Mammary epithelial cell (primary cell): ENCODE measurements at regions of chr20 and their contacts with region 1.

Region 1: DNA sequence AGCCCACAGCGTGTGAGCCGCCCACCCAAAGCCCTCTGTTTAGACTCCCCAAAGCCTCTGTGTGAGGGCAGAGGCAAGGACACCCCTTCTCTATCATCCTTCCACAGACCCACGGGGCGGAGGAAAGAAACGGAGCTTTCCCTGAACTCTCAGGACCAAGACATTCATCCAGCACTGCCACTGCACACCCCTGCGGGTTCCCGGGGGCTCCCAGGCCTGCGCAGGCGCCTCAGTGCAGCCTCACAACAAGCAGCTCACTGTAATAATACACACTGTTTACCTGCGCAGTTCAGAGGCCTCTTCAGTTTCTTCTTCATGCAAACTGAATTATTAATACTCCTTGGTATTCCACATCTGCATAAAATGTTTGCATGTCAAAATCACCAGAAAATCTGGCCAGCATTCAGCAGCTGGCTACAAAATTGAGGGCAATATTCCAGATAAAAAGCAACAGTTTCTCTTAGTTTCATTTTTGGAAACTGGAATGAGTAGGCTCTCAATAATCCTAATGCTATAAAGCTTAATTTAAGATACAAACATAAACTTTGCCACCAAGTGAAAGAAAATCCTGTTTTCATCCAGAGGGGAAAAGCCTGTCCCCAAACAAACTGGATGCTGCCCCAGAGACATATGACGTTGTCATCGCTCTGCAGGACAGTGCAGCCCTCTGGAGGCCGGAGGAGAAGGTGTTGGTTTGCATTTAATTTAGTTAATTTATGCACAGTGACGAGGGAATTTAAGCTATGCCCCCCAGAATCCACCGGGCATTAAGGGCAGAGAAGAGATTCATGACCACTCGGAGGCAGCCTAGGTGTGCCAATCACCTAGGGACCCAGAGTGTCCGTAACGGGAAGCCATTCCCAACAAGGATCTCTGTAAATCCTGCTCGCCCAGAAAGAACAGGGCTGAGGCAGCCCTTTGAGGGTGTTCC is 45.3 kb downstream of the NINL start:
- DNase-seq: peak; percentile 14
- H3K4me3 ChIP-seq: peak overlapping the region; percentile 4 to 29 (median 23)
- H3K27ac ChIP-seq: peak overlapping the region; percentile 6
- H3K4me1 ChIP-seq: peaks cover 16% of the 10 kb centered on the region
- H3K27me3 ChIP-seq: no peaks in the 10 kb centered on the region
- CTCF ChIP-seq: peak; percentile 34 to 74

Region 2: GRCh38 chr20:25336561-25337422 is 203.2 kb before region 1 on chr20:
- CTCF ChIA-PET with region 1: interaction called, 3 read pairs
- dilution Hi-C with region 1: no loop called
- in situ Hi-C with region 1: no loop called
- intact Hi-C with region 1: loop called (anchors 1 kb)
- DNase-seq: peak; percentile 76
- H3K4me3 ChIP-seq: no peak overlapping the region
- H3K27ac ChIP-seq: no peak overlapping the region
- H3K4me1 ChIP-seq: peaks cover 3% of the 10 kb centered on the region
- H3K27me3 ChIP-seq: no peaks in the 10 kb centered on the region
- CTCF ChIP-seq: peak; percentile 67 to 89

Region 3: GRCh38 chr20:25407311-25408169 is 132.5 kb before region 1 on chr20 and contains the start of gene GINS1:
- CTCF ChIA-PET with region 1: no interaction called
- dilution Hi-C with region 1: no loop called
- in situ Hi-C with region 1: no loop called
- intact Hi-C with region 1: loop called (anchors 5 kb)
- DNase-seq: peak; percentile 89
- H3K4me3 ChIP-seq: peak within 1 kb of the TSS; percentile 77 to 82 (median 78)
- H3K27ac ChIP-seq: peak within 1 kb of the TSS; percentile 73
- H3K4me1 ChIP-seq: peaks cover 11% of the 10 kb centered on the region
- H3K27me3 ChIP-seq: no peaks in the 10 kb centered on the region
- CTCF ChIP-seq: no peak
- total RNA-seq, gene GINS1: 5.7 to 16.8 TPM

Region 4: GRCh38 chr20:25470045-25470444 is 70.0 kb before region 1 on chr20:
- CTCF ChIA-PET with region 1: no interaction called
- dilution Hi-C with region 1: no loop called
- in situ Hi-C with region 1: no loop called
- intact Hi-C with region 1: loop called (anchors 1 kb)
- DNase-seq: peak; percentile 18
- H3K4me3 ChIP-seq: no peak overlapping the region
- H3K27ac ChIP-seq: no peak overlapping the region
- H3K4me1 ChIP-seq: no peaks in the 10 kb centered on the region
- H3K27me3 ChIP-seq: no peaks in the 10 kb centered on the region
- CTCF ChIP-seq: peak; percentile 49 to 76

Region 5: GRCh38 chr20:25496968-25497640 is 42.9 kb before region 1 on chr20:
- CTCF ChIA-PET with region 1: no interaction called
- dilution Hi-C with region 1: no loop called
- in situ Hi-C with region 1: no loop called
- intact Hi-C with region 1: no loop called
- DNase-seq: peak; percentile 93
- H3K4me3 ChIP-seq: no peak overlapping the region
- H3K27ac ChIP-seq: no peak overlapping the region
- H3K4me1 ChIP-seq: peaks cover 14% of the 10 kb centered on the region
- H3K27me3 ChIP-seq: no peaks in the 10 kb centered on the region
- CTCF ChIP-seq: no peak

Region 6: GRCh38 chr20:25517124-25517523 is 22.9 kb before region 1 on chr20:
- CTCF ChIA-PET with region 1: no interaction called
- dilution Hi-C with region 1: no loop called
- in situ Hi-C with region 1: no loop called
- intact Hi-C with region 1: no loop called
- DNase-seq: no peak
- H3K4me3 ChIP-seq: no peak overlapping the region
- H3K27ac ChIP-seq: no peak overlapping the region
- H3K4me1 ChIP-seq: no peaks in the 10 kb centered on the region
- H3K27me3 ChIP-seq: no peaks in the 10 kb centered on the region
- CTCF ChIP-seq: no peak

Region 7: DNA sequence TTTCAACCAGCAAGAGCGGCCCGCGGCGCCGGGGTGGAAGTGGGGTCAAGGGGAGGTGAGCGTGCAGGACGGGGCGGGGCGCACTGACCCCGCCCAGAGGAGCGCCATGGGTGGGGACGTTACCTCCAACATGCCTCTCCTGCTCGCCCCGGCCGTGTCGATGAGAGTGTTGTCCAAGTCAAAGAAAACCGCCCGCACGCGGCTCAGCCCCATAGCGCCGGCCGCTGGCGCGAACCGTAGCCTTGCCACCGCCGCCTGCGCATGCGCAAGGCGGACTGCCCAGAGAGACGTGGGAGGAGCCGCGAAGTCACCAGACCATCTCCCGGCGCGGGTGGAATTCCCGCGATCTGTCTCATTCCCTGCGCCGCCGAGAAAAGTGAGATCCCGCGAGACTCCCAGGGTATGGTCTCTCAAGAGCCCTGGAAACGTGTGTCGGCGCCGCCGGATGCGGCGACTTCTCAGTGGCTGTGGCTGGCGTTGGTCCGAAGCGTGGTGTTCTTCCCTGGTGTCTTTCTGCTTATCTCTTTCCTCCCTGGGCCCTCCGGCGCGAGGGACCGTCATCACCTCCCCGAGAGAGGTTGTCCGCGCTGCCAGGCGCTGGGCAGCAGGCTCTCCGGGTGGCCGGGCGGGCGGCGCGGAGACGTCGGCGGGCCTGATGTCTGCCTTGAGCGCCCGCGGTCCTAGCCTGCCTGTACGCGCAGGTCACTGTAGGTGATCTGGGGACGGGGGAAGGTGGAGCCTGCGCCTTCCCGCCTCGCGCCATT is 83.9 kb after region 1 on chr20 and contains the start of gene NANP:
- CTCF ChIA-PET with region 1: no interaction called
- dilution Hi-C with region 1: no loop called
- in situ Hi-C with region 1: no loop called
- intact Hi-C with region 1: no loop called
- DNase-seq: peak; percentile 98
- H3K4me3 ChIP-seq: peak within 1 kb of the TSS; percentile 53 to 94 (median 87)
- H3K27ac ChIP-seq: peak within 1 kb of the TSS; percentile 83
- H3K4me1 ChIP-seq: peaks cover 18% of the 10 kb centered on the region
- H3K27me3 ChIP-seq: no peaks in the 10 kb centered on the region
- CTCF ChIP-seq: peak in 1 of 2 donors; percentile 25
- total RNA-seq, gene NANP: 7.5 TPM

Region 8: DNA sequence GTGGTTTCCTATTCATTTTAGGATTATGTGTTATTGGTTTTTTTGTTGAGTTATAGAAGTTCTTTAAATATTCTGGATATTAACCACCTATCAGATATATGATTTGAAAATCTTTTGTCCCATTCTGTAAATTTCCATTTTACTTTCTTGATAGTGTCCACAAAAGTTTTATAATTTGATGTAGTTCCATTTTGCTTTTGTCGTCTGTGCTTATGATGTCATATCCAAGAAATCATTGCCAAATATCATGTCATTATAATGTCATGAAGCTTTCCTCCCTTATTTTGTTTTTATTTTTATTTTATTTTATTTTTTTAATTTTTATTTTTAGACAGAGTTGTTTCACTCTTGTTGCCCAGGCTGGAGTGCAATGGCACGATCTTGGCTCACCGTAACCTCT is 104.8 kb after region 1 on chr20:
- CTCF ChIA-PET with region 1: no interaction called
- dilution Hi-C with region 1: loop called (anchors 5 kb)
- in situ Hi-C with region 1: no loop called
- intact Hi-C with region 1: no loop called
- DNase-seq: no peak
- H3K4me3 ChIP-seq: no peak overlapping the region
- H3K27ac ChIP-seq: no peak overlapping the region
- H3K4me1 ChIP-seq: no peaks in the 10 kb centered on the region
- H3K27me3 ChIP-seq: no peaks in the 10 kb centered on the region
- CTCF ChIP-seq: no peak